ENCODE measurements at regions of chrX and their contacts with region 1.

Region 1: GRCh38 chrX:104113222-104113965 is 1.1 kb downstream of the ZCCHC18 start:
- DNase-seq: peak; percentile 74
- ATAC-seq: peak; percentile 57
- H3K4me3 Mint-ChIP-seq: peak overlapping the region; percentile 78
- H3K27ac Mint-ChIP-seq: peak overlapping the region; percentile 89
- H3K4me1 Mint-ChIP-seq: peaks cover 47% of the 10 kb centered on the region
- H3K27me3 Mint-ChIP-seq: no peaks in the 10 kb centered on the region

Region 2: DNA sequence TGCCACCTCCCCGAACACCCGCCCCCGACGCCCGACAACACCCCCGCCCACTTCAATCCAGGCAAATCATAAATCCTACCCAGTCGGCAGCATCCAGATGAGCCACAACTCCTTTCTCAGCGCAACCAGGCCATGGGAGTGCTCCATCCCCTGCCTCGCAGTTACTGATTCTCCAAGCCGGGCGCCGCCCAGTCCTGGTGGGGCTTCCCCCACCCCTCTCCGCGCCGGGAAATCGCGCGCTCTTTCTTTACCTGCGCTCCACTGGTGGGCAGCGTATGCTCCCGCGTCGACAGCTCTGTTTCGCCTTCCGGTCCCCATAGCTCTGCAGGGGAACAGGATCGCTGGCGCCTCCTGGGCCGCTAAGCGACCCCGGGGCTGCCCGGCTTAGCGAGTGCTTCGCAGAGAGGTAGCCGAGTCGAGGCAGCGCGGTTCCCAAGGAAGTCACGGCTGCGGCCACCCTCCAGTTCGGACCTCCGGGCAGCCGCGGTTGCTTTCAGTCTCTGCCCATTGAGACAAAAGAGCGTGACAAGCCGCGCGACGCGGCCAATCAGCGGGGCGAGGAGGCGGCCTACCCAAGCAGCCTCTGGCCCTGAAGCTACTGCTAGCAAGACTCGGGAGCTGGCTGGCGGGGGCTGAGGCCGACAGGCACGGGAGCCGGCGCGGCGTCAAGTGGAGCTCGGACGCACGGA is 194.7 kb before region 1 on chrX:
- CTCF ChIA-PET with region 1: interaction called, 10 read pairs
- DNase-seq: peak; percentile 75
- ATAC-seq: peak; percentile 83
- H3K4me3 Mint-ChIP-seq: peak overlapping the region; percentile 84
- H3K27ac Mint-ChIP-seq: peak overlapping the region; percentile 92
- H3K4me1 Mint-ChIP-seq: peaks cover 29% of the 10 kb centered on the region
- H3K27me3 Mint-ChIP-seq: no peaks in the 10 kb centered on the region

Region 3: DNA sequence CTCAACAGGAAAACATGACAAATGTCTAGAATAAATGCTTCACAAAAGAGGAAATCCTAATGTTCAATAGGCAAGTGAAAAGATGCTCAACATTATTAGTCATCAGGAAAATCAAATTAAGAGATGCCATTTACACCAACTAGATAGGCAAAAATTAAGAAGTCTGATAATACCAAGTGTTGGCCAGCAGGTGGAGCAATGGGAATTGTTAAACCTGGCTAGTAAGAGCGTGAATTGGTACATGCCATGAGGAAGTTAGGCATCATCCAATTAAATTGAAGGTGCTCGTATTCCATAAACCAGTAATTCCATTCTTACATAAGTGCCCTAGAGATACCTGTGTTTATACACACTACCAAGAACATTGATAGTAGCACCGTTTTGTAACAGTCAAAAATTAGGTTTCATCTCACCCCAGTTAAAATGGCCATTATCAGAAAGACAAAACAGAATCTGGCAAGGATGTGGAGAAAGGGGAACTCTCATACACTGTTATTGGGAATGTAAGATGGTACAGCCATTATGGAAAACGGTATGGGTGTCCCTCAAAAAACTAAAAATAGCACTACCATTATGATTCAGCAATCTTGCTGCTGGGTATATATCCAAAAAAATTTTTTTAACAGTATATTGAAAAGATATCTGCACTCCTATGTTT is 15.1 kb before region 1 on chrX:
- CTCF ChIA-PET with region 1: interaction called, 25 read pairs
- DNase-seq: peak; percentile 55
- ATAC-seq: peak; percentile 55
- H3K4me3 Mint-ChIP-seq: no peak overlapping the region
- H3K27ac Mint-ChIP-seq: no peak overlapping the region
- H3K4me1 Mint-ChIP-seq: peaks cover 3% of the 10 kb centered on the region
- H3K27me3 Mint-ChIP-seq: no peaks in the 10 kb centered on the region

Region 4: GRCh38 chrX:104156630-104157529 is 43.5 kb after region 1 on chrX and contains the start of gene SLC25A53:
- CTCF ChIA-PET with region 1: interaction called, 12 read pairs
- DNase-seq: peak; percentile 86
- ATAC-seq: peak; percentile 94
- H3K4me3 Mint-ChIP-seq: peak within 1 kb of the TSS; percentile 97
- H3K27ac Mint-ChIP-seq: peak within 1 kb of the TSS; percentile 100
- H3K4me1 Mint-ChIP-seq: peaks cover 22% of the 10 kb centered on the region
- H3K27me3 Mint-ChIP-seq: no peaks in the 10 kb centered on the region
- total RNA-seq, gene SLC25A53: 7.4 to 9.6 TPM

Region 5: DNA sequence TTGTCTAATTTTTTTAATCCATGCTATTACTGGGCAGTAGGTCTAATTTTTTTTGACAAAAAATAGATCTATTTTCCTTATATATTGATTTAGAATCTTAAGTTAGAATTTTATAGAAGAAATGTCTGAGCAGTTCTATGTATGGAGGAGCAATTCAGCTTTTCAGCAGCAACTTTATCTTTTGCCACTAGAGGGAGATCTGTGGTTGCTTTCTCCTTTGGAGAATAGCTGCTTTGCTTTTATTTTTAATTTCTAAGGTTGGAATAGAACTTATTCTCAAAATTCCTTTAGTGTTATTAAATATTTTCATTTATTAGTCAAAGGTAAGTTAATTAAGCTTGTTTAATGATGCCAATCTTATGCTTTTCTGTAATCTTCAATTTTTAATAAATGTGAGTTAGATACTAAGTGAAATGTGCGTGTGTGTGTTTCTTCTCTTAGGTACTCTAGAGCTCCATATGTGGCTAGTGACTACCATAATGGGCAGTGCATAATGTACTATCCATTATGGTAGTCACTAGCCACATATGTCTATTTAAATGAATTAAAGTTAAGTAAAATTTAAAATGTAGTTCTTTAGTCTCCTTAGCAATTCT is 82.2 kb after region 1 on chrX:
- CTCF ChIA-PET with region 1: no interaction called
- DNase-seq: no peak
- ATAC-seq: no peak
- H3K4me3 Mint-ChIP-seq: no peak overlapping the region
- H3K27ac Mint-ChIP-seq: no peak overlapping the region
- H3K4me1 Mint-ChIP-seq: no peaks in the 10 kb centered on the region
- H3K27me3 Mint-ChIP-seq: no peaks in the 10 kb centered on the region

Region 6: DNA sequence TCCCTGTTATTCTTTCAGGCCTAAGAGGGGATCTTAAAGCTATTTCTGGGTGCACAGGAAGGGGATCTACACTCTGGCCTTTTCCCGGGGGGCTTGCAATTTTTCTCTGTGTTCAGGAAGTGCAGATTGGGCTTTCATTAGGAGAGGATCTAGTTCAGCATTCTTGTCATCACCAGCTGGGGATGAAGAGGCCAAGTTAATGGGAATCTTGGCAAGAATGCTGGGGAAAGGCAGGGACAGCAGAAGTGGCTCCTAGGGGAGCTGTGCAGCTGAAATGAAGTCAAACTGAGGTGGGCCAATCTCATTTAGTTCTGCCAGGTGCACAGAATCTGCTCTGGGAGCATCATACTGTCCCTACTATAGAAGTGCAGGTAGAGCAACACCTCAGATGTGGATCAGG is 182.2 kb after region 1 on chrX:
- CTCF ChIA-PET with region 1: no interaction called
- DNase-seq: no peak
- ATAC-seq: no peak
- H3K4me3 Mint-ChIP-seq: no peak overlapping the region
- H3K27ac Mint-ChIP-seq: no peak overlapping the region
- H3K4me1 Mint-ChIP-seq: no peaks in the 10 kb centered on the region
- H3K27me3 Mint-ChIP-seq: no peaks in the 10 kb centered on the region

Region 7: DNA sequence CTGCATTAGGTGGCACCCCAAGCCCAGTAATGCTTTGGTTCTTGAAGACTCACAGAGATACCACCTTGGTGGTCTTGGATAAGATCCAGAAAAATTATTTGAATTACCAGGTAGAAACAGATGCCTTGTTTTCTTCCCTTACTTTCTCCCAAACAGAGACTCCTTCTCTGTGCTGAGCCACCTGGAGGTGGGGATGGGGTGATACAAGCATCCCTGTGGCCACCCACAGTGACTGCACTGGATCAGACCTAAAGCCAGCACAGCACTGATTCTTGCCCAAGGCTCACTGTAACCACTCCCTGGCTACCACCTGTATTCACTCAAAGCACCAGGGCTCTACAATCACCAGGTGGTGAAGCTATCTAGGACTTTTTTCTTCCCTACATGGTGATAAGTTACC is 950.3 kb after region 1 on chrX:
- CTCF ChIA-PET with region 1: no interaction called
- DNase-seq: no peak
- ATAC-seq: no peak
- H3K4me3 Mint-ChIP-seq: no peak overlapping the region
- H3K27ac Mint-ChIP-seq: no peak overlapping the region
- H3K4me1 Mint-ChIP-seq: no peaks in the 10 kb centered on the region
- H3K27me3 Mint-ChIP-seq: no peaks in the 10 kb centered on the region